B cell (primary cell): ENCODE measurements at regions of chr12 and their contacts with region 1.

Region 1: DNA sequence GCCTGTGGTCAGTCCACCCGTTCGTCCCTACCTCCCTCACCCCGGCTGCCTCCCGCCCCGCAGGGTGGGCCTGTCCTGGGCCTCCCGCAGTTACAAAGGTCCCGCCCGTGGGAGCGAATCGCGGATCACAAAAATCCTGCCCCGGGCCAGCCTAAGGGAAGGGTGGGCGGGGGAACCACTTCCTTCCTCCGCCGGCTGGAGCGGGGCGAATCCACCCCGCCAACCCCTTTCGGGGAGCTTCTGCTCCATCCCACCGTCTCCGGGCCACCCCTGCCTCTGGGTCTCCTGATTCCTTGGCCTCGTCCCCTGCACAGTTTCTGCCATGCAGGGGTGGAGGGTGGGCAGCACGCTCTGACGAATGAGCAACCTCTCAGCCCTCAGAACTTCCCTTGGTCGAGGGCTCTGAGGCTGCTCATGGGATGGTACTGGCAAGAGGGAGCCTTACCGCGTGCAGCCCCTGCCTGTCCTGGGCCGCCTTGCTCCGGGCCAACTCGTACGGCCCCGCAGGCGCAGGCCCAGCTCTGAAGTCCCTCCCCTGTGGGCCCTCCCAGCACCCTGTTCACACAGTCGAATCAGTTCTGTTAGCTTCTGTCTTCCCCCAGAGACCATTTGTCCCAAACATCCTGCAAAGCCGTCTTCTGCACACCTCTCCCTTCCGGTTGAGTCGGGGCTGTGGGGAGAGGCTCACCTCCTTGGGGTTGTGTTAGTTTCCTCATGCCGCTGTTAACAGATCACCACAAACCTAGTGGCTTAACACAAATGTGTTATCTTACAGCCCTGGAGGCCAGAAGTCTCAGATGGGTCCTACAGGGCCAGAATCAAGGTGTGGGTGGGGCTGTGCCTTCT is 589 bp upstream of the HVCN1 start:
- DNase-seq: peak; percentile 79
- ATAC-seq: peak; percentile 71
- H3K4me3 ChIP-seq: peak overlapping the region in 4 of 5 experiments; percentile 72 to 98 (median 88)
- H3K4me3 Mint-ChIP-seq: peak overlapping the region; percentile 99
- H3K27ac ChIP-seq: peak overlapping the region; percentile 55 to 70
- H3K27ac Mint-ChIP-seq: peak overlapping the region; percentile 96
- H3K4me1 ChIP-seq: peaks cover 54 to 69% of the 10 kb centered on the region in 2 donors
- H3K4me1 Mint-ChIP-seq: peaks cover 71% of the 10 kb centered on the region
- H3K27me3 ChIP-seq: no peaks in the 10 kb centered on the region
- H3K27me3 Mint-ChIP-seq: no peaks in the 10 kb centered on the region
- CTCF ChIP-seq: no peak

Region 2: GRCh38 chr12:110606253-110606611 is 83.3 kb before region 1 on chr12:
- CTCF ChIA-PET with region 1: interaction called, 34 read pairs
- POLR2A ChIA-PET with region 1: interaction called, 18 read pairs
- intact Hi-C with region 1: no loop called
- DNase-seq: peak; percentile 43
- ATAC-seq: no peak
- H3K4me3 ChIP-seq: peak overlapping the region; percentile 7 to 74 (median 55)
- H3K4me3 Mint-ChIP-seq: peak overlapping the region; percentile 77
- H3K27ac ChIP-seq: peak overlapping the region; percentile 77 to 94
- H3K27ac Mint-ChIP-seq: peak overlapping the region; percentile 88
- H3K4me1 ChIP-seq: peaks cover 71 to 83% of the 10 kb centered on the region in 2 donors
- H3K4me1 Mint-ChIP-seq: peaks cover 65% of the 10 kb centered on the region
- H3K27me3 ChIP-seq: no peaks in the 10 kb centered on the region
- H3K27me3 Mint-ChIP-seq: no peaks in the 10 kb centered on the region
- CTCF ChIP-seq: no peak

Region 3: GRCh38 chr12:110647631-110648040 is 41.9 kb before region 1 on chr12:
- CTCF ChIA-PET with region 1: interaction called, 5 read pairs
- POLR2A ChIA-PET with region 1: interaction called, 7 read pairs
- intact Hi-C with region 1: loop called (anchors 5 kb)
- DNase-seq: peak; percentile 95
- ATAC-seq: peak; percentile 85
- H3K4me3 ChIP-seq: peak overlapping the region in 1 of 5 experiments; percentile 5
- H3K4me3 Mint-ChIP-seq: peak overlapping the region; percentile 79
- H3K27ac ChIP-seq: peak overlapping the region; percentile 90
- H3K27ac Mint-ChIP-seq: peak overlapping the region; percentile 98
- H3K4me1 ChIP-seq: peaks cover 90% of the 10 kb centered on the region in 2 donors
- H3K4me1 Mint-ChIP-seq: peaks cover 91% of the 10 kb centered on the region
- H3K27me3 ChIP-seq: no peaks in the 10 kb centered on the region
- H3K27me3 Mint-ChIP-seq: no peaks in the 10 kb centered on the region
- CTCF ChIP-seq: no peak

Region 4: DNA sequence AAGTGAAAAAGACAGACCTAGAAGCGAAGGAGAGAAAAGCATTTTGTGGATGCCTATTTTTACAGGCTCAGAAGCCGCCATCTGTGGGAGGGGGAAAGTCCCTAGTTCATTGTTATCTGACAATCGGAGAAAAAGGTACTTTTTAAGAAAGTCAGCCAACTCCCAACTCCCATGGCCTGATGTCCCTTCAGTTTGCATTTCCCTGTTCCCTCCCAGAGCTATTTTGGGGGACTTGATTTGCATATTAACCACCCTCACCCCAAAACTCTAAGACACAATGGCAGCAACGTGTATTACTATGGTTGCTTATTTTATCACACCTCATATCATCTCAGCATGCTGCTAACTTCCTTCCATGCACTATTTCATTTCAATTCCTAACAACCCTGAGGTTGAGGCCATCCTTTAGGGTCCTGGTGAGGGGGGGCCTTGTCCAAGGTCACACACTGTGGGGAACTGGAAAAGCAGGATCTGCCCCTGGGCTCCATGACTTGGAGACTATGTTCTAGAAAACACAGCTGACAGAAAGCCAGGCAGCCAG is 19.3 kb before region 1 on chr12:
- CTCF ChIA-PET with region 1: interaction called, 6 read pairs
- POLR2A ChIA-PET with region 1: interaction called, 28 read pairs
- intact Hi-C with region 1: loop called (anchors 1 kb)
- DNase-seq: peak; percentile 84
- ATAC-seq: peak; percentile 46
- H3K4me3 ChIP-seq: peak overlapping the region in 1 of 5 experiments; percentile 15
- H3K4me3 Mint-ChIP-seq: peak overlapping the region; percentile 84
- H3K27ac ChIP-seq: peak overlapping the region; percentile 84 to 99
- H3K27ac Mint-ChIP-seq: peak overlapping the region; percentile 96
- H3K4me1 ChIP-seq: peaks cover 91 to 100% of the 10 kb centered on the region in 2 donors
- H3K4me1 Mint-ChIP-seq: peaks cover 86% of the 10 kb centered on the region
- H3K27me3 ChIP-seq: no peaks in the 10 kb centered on the region
- H3K27me3 Mint-ChIP-seq: no peaks in the 10 kb centered on the region
- CTCF ChIP-seq: no peak

Region 5: DNA sequence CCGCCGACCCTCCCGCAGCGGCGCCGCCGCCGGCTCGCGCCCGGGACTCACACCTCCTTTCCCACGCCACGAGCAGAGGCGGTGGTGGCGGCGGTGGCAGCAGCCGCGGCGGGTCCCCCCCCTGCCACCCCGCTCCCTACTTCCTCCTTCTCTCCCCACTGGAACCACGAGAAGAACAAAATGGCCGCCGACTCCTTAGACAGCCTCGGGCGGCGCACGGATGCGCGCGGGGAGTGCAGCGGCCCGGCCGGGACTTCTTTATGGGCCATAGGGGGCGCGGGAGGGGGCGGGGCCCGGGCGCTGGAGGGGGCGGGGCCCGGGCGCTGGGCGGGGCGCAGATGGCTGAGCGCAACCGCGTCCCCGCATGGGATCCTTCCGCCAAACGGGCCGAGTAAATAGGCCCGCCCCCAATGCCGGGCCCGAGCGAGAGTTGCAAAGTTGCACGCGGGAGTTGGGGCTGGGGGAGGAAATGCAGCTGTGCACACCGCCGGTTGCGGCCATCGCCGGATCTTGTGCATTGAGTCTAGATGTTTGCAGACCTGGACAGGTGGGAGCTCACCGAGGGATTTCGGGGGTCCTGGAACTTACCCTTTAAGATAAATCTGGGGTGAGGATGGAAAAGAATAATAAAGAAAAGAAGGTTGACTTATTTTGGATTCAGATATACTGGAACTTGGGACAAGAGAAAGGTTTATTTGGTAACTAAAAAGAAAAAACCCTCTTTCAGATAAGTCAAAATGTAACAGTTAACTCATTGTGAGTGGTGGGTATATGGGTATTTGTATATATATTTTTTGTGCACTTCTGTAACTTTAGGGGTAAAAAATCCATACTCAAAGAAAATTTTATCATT is 53.4 kb after region 1 on chr12 and contains the start of gene PPP1CC:
- CTCF ChIA-PET with region 1: no interaction called
- POLR2A ChIA-PET with region 1: no interaction called
- intact Hi-C with region 1: loop called (anchors 5 kb)
- DNase-seq: peak; percentile 97
- ATAC-seq: peak; percentile 95
- H3K4me3 ChIP-seq: peak within 1 kb of the TSS; percentile 86 to 94 (median 92)
- H3K4me3 Mint-ChIP-seq: peak within 1 kb of the TSS; percentile 99
- H3K27ac ChIP-seq: peak within 1 kb of the TSS; percentile 31 to 78
- H3K27ac Mint-ChIP-seq: peak within 1 kb of the TSS; percentile 95
- H3K4me1 ChIP-seq: peaks cover 32 to 36% of the 10 kb centered on the region in 2 donors
- H3K4me1 Mint-ChIP-seq: peaks cover 40% of the 10 kb centered on the region
- H3K27me3 ChIP-seq: no peaks in the 10 kb centered on the region
- H3K27me3 Mint-ChIP-seq: no peaks in the 10 kb centered on the region
- CTCF ChIP-seq: no peak
- total RNA-seq, gene PPP1CC: 146 and 150 TPM in 2 replicates